ENCODE measurements at regions of chr12 and their contacts with region 1.

Region 1: GRCh38 chr12:122399592-122400373 is 22.7 kb downstream of the CLIP1 start:
- H3K4me3 ChIP-seq: peak overlapping the region; percentile 20; the same call in 1 of the 2 replicates
- H3K27ac ChIP-seq: peak overlapping the region; percentile 71
- H3K4me1 ChIP-seq: peaks cover 1% of the 10 kb centered on the region; the same call in 1 of the 2 replicates
- CTCF ChIP-seq: peak; percentile 39; the same call in 1 of the 2 replicates

Region 2: DNA sequence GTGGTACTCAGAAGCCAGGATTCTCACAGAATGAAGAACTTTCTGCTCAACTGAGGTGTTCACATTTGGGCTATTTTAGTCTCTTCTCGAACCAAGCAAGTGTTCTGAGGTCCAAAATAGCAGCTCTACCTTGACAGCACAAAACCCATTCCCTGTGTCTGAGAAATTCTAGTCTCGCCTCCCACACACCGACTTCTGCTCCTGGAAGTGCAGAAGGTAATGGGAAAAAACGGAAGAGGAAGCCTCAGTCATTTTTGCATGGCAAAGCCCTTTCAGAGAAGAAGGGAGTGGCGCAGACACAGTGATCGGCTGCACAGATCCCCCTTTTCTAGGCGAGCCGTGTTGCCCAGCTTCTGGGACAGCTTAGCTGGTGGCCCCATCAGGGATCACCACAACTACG is 102.3 kb before region 1 on chr12:
- CTCF ChIA-PET with region 1: no interaction called
- POLR2A ChIA-PET with region 1: no interaction called
- H3K4me3 ChIP-seq: no peak overlapping the region
- H3K27ac ChIP-seq: no peak overlapping the region
- H3K4me1 ChIP-seq: no peaks in the 10 kb centered on the region
- CTCF ChIP-seq: no peak

Region 3: GRCh38 chr12:122336015-122336946 is 63.5 kb before region 1 on chr12:
- CTCF ChIA-PET with region 1: interaction called, 10 read pairs
- POLR2A ChIA-PET with region 1: no interaction called
- H3K4me3 ChIP-seq: no peak overlapping the region
- H3K27ac ChIP-seq: no peak overlapping the region
- H3K4me1 ChIP-seq: no peaks in the 10 kb centered on the region
- CTCF ChIP-seq: peak; percentile 57; the same call in 1 of the 2 replicates

Region 4: DNA sequence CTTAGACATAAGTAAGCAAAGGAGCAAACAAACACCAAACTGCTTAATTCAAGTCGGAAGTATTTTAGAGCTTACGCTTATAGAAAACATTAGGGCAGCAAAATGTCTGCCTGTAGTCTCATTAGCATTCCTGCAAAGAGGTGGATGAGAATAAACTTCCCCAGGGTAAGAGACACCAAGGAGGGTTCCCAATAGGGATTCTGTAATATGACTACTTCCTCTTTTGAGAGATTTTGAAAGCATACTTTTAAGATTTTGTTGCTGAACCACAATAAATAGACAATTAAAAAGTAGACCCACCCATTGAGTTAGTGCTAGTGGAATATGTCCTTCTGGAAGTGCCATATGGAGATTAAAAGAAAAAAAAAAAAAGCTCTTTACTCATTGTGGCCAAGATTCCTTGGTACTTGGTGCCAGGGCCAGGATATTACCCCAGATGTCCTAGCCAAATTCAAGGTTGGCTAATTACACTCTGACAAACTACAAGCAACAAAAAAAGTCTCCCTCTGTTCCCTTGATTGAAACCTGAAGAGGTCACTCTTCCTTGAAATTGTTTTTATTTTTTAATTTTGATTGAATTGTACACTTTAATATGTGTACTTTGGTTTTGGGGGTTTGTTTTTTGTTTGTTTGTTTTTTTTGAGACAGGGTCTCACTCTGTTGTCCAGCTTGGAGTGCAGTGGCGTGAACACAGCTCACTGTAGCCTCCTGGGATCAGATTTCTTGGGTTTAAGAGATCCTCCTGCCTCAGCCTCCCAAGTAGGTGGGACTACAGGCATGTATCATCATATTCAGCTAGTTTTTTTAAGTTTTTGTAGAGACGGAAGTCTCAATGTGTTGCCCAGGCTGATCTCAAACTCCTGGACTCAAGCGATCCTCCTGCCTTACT is 14.0 kb after region 1 on chr12:
- CTCF ChIA-PET with region 1: interaction called, 11 read pairs
- POLR2A ChIA-PET with region 1: interaction called, 8 read pairs
- H3K4me3 ChIP-seq: no peak overlapping the region
- H3K27ac ChIP-seq: no peak overlapping the region
- H3K4me1 ChIP-seq: peaks cover 17% of the 10 kb centered on the region; the same call in 1 of the 2 replicates
- CTCF ChIP-seq: no peak

Region 5: DNA sequence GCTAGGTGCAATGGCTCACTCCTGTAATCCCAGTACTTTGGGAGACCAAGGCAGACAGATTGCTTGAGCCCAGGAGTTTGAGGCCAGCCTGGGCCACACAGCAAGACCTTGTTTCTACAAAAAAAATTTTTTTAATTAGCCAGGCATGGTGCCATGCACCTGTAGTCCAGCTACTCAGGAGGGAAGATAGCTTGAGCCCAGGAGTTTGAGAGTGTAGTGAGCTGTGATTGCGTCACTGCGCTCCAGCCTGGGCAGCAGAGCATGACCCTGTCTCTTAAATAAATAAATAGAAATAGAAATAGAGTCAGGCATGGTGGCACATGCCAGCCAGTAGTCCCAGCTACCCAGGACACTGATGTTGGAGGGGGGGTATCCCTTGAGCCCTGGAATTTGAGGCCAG is 59.4 kb after region 1 on chr12:
- CTCF ChIA-PET with region 1: interaction called, 6 read pairs
- POLR2A ChIA-PET with region 1: interaction called, 11 read pairs
- H3K4me3 ChIP-seq: no peak overlapping the region
- H3K27ac ChIP-seq: no peak overlapping the region
- H3K4me1 ChIP-seq: no peaks in the 10 kb centered on the region
- CTCF ChIP-seq: no peak

Region 6: GRCh38 chr12:122500685-122501488 is 101.1 kb after region 1 on chr12 and contains the start of gene ZCCHC8:
- CTCF ChIA-PET with region 1: interaction called, 23 read pairs
- POLR2A ChIA-PET with region 1: interaction called, 31 read pairs
- H3K4me3 ChIP-seq: peak within 1 kb of the TSS; percentile 85
- H3K27ac ChIP-seq: peak within 1 kb of the TSS; percentile 95
- H3K4me1 ChIP-seq: peaks cover 3% of the 10 kb centered on the region; the same call in 1 of the 2 replicates
- CTCF ChIP-seq: peak; percentile 59

Region 7: DNA sequence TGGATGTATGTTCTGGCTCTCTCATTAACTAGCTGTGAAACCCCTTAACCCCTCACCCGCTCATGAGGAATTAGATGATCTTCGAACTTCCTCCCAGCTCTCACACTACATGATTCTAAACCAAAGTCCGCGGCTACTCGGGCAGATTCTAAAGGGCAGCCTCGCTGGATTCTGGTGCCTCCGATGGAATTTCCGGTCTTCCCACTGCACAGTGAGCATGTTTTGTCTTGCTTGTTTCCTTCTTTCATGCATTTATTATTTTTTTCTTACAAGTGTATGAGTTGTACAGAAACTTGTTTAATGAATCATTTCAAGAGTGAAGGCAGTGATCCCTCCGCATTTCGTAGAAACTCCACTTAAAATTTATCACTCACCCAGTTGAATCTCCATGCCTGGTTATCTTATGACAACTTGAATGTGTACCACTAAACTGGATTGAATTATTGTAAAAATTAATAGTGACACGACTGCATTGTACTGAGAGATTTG is 321.3 kb after region 1 on chr12:
- CTCF ChIA-PET with region 1: no interaction called
- POLR2A ChIA-PET with region 1: no interaction called
- H3K4me3 ChIP-seq: no peak overlapping the region
- H3K27ac ChIP-seq: no peak overlapping the region
- H3K4me1 ChIP-seq: no peaks in the 10 kb centered on the region
- CTCF ChIP-seq: no peak

Measured in HEK293 (cell line).